ENCODE measurements at regions of chr11 and their contacts with region 1.

Region 1: GRCh38 chr11:43920598-43921419 is 21.6 kb upstream of the C11orf96 start:
- DNase-seq: peak in 2 of 6 donors; percentile 41 to 71
- ATAC-seq: peak; percentile 75 to 91 (median 80)
- H3K4me3 ChIP-seq: no peak overlapping the region
- H3K27ac ChIP-seq: peak overlapping the region in 2 of 4 donors; percentile 43 to 46
- H3K4me1 ChIP-seq: peaks cover 0 to 7% (median 0%) of the 10 kb centered on the region in 3 donors
- H3K27me3 ChIP-seq: no peaks in the 10 kb centered on the region
- CTCF ChIP-seq: no peak

Region 2: GRCh38 chr11:43680521-43681400 is 240.0 kb before region 1 on chr11 and contains the start of gene HSD17B12:
- intact Hi-C with region 1: no loop called
- DNase-seq: peak; percentile 96 to 99 (median 98)
- ATAC-seq: peak; percentile 96 to 99 (median 98)
- H3K4me3 ChIP-seq: peak within 1 kb of the TSS; percentile 71 to 94 (median 86)
- H3K27ac ChIP-seq: peak within 1 kb of the TSS; percentile 69 to 95 (median 84)
- H3K4me1 ChIP-seq: peaks cover 0 to 17% (median 3%) of the 10 kb centered on the region in 3 donors
- H3K27me3 ChIP-seq: no peaks in the 10 kb centered on the region
- CTCF ChIP-seq: no peak
- total RNA-seq, gene HSD17B12: 24.7 to 51.9 (median 43.9) TPM

Region 3: GRCh38 chr11:43880640-43881159 is 40.1 kb before region 1 on chr11 and contains the start of gene ALKBH3:
- intact Hi-C with region 1: no loop called
- DNase-seq: peak; percentile 87 to 97 (median 90)
- ATAC-seq: peak; percentile 100
- H3K4me3 ChIP-seq: peak within 1 kb of the TSS; percentile 64 to 85 (median 70)
- H3K27ac ChIP-seq: no peak within 1 kb of the TSS
- H3K4me1 ChIP-seq: peaks cover 0 to 12% (median 4%) of the 10 kb centered on the region in 3 donors
- H3K27me3 ChIP-seq: no peaks in the 10 kb centered on the region
- CTCF ChIP-seq: no peak
- total RNA-seq, gene ALKBH3: 13.9 to 20.1 (median 17.0) TPM

Region 4: GRCh38 chr11:43969543-43969942 is 48.7 kb after region 1 on chr11:
- intact Hi-C with region 1: no loop called
- DNase-seq: no peak
- ATAC-seq: peak in 2 of 4 donors; percentile 54 to 55
- H3K4me3 ChIP-seq: no peak overlapping the region
- H3K27ac ChIP-seq: no peak overlapping the region
- H3K4me1 ChIP-seq: no peaks in the 10 kb centered on the region
- H3K27me3 ChIP-seq: no peaks in the 10 kb centered on the region
- CTCF ChIP-seq: no peak

Region 5: DNA sequence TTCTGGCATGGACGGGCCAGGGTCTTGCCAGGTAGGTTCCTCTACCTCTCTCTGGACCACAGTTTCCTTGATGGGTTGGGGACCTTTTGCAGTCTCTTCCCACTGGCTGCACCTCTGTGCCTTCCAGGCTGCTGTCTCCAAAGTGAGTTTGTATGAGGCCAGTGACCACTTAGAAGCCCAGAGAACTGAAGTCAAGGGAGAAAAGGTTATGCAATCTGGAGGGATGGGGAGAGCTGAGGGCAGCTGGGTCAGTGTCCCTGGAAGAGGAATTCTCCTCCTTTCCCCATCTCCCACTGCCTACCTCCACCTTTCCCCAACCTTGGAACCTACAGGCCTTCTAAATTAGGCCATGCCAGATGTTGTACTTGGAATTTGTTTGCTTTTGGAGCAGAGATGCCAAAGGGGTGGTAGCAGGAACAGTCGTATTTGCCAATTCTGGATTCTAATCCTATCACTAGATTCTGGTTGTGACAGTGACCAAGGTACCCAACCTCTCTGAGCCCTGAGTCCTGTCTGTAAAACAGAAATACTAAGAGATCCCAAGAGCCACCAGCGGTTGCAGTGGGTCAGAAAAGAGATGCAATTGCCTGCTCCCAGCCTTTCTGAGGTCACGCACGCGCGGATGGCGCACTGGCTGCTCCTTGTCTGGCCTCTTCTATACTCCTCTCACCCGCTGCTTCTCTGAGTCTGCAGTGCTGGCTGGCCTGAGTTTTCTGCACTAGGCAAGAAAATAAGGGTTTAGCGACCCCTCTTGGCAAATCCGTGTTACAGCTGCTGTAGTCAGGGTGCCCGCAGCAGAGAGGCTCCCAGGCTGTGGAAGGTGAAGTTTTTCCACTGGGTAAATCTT is 116.2 kb after region 1 on chr11:
- intact Hi-C with region 1: loop called in 1 of 3 experiments (anchors 10 kb)
- DNase-seq: peak in 5 of 6 donors; percentile 49 to 76 (median 72)
- ATAC-seq: peak; percentile 77 to 99 (median 98)
- H3K4me3 ChIP-seq: no peak overlapping the region
- H3K27ac ChIP-seq: no peak overlapping the region
- H3K4me1 ChIP-seq: no peaks in the 10 kb centered on the region
- H3K27me3 ChIP-seq: no peaks in the 10 kb centered on the region
- CTCF ChIP-seq: peak; percentile 19 to 78 (median 69)